ENCODE measurements at regions of chr1 and their contacts with region 1.

Region 1: GRCh38 chr1:153608742-153609584 is 4.0 kb downstream of the S100A16 start:
- DNase-seq: peak; percentile 72 to 92
- H3K4me3 ChIP-seq: peak overlapping the region; percentile 41 to 75
- H3K27ac ChIP-seq: peak overlapping the region; percentile 90 to 96
- H3K4me1 ChIP-seq: peaks cover 7 to 38% of the 10 kb centered on the region in 2 donors
- H3K27me3 ChIP-seq: no peaks in the 10 kb centered on the region
- CTCF ChIP-seq: no peak

Region 2: GRCh38 chr1:153626922-153627796 is 18.2 kb after region 1 on chr1 and contains the start of gene S100A13:
- intact Hi-C with region 1: loop called (anchors 2 kb)
- DNase-seq: peak in 1 of 2 donors; percentile 84
- H3K4me3 ChIP-seq: peak within 1 kb of the TSS; percentile 66 to 69
- H3K27ac ChIP-seq: peak within 1 kb of the TSS; percentile 87 to 94
- H3K4me1 ChIP-seq: peaks cover 3 to 34% of the 10 kb centered on the region in 2 donors
- H3K27me3 ChIP-seq: no peaks in the 10 kb centered on the region
- CTCF ChIP-seq: peak; percentile 50 to 72 (median 56)
- total RNA-seq, gene S100A13: 89.7 TPM

Region 3: DNA sequence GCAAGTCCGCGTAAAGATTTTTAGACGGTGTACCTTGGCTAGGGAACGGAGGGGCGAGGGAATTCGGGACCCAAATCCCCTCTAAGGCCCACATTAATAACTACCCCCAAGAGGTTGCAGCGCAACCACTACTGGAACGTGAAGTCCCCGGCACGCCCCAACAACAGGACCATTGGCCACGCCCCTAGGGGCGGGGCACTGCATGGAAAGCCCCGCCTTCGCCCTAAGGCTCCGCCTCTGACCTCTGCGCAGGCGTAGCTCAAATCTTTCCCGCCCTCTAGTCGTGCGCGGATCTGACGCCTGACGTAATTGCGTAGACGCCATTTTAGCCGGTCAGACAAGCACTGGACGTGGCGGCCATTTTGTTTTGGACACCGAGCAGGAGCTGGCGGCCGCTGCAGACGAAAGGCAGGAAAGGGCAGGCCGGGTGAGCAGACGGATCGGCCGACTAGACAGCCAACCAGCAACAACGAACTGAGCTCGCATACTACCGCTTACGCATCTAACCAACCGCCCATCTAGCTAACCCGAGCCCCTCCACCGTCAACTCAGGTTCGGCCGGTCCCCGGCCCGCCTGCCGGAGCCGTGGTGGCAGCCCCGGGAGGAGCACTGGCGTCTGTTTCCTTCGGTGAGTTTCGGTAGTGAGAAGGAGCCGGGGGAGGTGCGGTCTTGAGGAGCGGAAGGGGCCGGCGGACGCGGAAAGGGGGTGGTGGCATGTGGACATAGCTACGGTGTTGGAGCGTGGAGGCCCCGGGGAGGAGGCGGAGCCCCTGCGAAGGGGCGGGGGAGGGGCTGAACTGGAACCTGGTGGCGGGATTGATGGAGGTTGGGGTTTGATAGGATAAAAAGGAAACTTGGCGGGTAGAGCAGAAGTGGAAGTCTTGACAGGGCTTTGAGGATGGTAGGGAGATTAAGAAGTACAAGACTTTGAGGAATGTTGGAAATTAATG is 25.0 kb after region 1 on chr1 and contains the start of gene CHTOP:
- intact Hi-C with region 1: loop called (anchors 2 kb)
- DNase-seq: peak; percentile 92 to 99
- H3K4me3 ChIP-seq: peak within 1 kb of the TSS; percentile 71 to 97
- H3K27ac ChIP-seq: peak within 1 kb of the TSS; percentile 97 to 100
- H3K4me1 ChIP-seq: peaks cover 7 to 24% of the 10 kb centered on the region in 2 donors
- H3K27me3 ChIP-seq: no peaks in the 10 kb centered on the region
- CTCF ChIP-seq: no peak
- total RNA-seq, gene CHTOP: 58.9 TPM

Region 4: GRCh38 chr1:153649863-153650235 is 40.9 kb after region 1 on chr1:
- intact Hi-C with region 1: no loop called
- DNase-seq: peak in 1 of 2 donors; percentile 68
- H3K4me3 ChIP-seq: no peak overlapping the region
- H3K27ac ChIP-seq: peak overlapping the region in 1 of 2 donors; percentile 29
- H3K4me1 ChIP-seq: peaks cover 5 to 12% of the 10 kb centered on the region in 2 donors
- H3K27me3 ChIP-seq: no peaks in the 10 kb centered on the region
- CTCF ChIP-seq: no peak